Right cardiac atrium (tissue), 5 donors: ENCODE measurements at regions of chr17 and their contacts with region 1.

Region 1: DNA sequence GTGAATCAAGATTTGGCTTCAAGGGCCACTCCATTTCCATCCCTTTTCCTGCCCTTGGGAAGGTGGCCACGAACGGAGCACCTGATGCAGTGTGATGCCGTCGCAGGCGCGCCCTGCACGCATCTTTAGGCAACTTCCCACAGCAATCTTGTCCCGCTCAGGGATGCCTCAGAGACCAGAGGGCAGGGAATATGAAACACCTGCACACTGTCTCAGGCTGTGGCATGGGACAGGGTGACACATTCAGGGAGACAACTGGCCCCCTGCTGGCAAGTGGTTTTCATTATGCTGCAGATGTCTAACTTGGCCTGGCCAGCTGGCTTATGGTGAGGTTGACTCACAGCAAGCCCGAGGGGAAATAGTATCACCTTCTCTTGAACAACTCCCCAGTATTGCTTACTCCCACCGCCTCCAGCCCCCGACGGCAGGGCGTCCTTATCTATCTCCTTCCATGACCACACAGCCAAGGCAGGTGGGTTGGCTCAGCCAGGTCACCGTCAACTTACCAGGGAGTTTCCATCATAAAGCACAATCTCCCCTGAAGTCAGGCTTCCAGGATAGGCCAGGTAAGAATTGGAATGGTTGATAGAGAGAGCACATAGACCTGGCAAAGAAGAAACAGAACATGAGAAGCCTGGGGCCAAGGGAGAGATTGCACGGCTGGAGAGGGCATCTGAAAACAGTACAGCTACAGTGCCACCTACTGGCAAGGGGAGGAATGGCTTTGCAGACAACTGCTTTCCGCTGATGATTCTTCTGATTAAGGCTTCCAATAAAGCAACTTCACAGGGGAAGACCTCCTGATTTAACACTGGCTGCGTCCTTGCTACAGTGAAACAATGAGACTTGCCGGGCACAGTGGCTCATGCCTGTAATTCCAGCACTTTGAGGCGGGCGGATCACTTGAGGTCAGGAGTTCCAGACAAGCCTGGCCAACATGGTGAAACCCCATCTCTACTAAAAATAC is 21.1 kb downstream of the WIPI1 start:
- DNase-seq: peak; percentile 74 to 87 (median 80)
- ATAC-seq: peak; percentile 52
- H3K4me3 ChIP-seq: no peak overlapping the region
- H3K27ac ChIP-seq: peak overlapping the region; percentile 69
- H3K4me1 ChIP-seq: peaks cover 6% of the 10 kb centered on the region
- H3K27me3 ChIP-seq: no peaks in the 10 kb centered on the region

Region 2: GRCh38 chr17:68260051-68260762 is 176.0 kb before region 1 on chr17:
- intact Hi-C with region 1: loop called (anchors 5 to 10 kb)
- DNase-seq: no peak
- ATAC-seq: no peak
- H3K4me3 ChIP-seq: no peak overlapping the region
- H3K27ac ChIP-seq: no peak overlapping the region
- H3K4me1 ChIP-seq: peaks cover 4% of the 10 kb centered on the region
- H3K27me3 ChIP-seq: no peaks in the 10 kb centered on the region